ENCODE measurements at regions of chr1 and their contacts with region 1.

Region 1: GRCh38 chr1:156689035-156689952 is 12.1 kb upstream of the NES start:
- DNase-seq: peak; percentile 85
- H3K4me3 ChIP-seq: peak overlapping the region; percentile 39 to 51
- H3K27ac ChIP-seq: peak overlapping the region in 1 of 2 experiments; percentile 86; a peak in 2 of 4 replicates
- H3K4me1 ChIP-seq: peaks cover 13 to 52% of the 10 kb centered on the region in 2 experiments; a peak in 3 of 4 replicates
- H3K27me3 ChIP-seq: no peaks in the 10 kb centered on the region
- CTCF ChIP-seq: peak; percentile 74
- EP300 ChIP-seq: no peak
- RAD21 ChIP-seq: peak; percentile 99

Region 2: DNA sequence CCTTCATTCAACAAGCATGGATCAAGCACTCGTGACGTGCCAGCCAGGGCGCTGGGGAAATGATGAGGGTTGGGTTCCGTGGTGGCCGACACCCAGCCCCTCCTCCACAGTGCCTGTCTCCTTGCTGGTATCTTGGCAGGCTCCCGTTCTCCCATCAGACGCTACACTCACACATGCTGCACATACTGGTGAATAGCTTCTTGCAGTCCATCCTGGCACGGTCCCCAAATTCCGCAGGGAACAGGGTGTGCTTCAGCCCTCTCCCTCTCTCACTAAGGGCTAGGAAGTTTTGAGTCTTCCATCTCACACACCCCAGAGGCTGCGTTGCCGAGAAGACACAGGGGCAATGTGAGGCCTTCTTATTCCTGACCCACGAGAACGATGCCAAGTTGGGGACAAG is 178.6 kb before region 1 on chr1:
- CTCF ChIA-PET with region 1: no interaction called
- POLR2A ChIA-PET with region 1: no interaction called
- DNase-seq: no peak
- H3K4me3 ChIP-seq: no peak overlapping the region
- H3K27ac ChIP-seq: no peak overlapping the region
- H3K4me1 ChIP-seq: peaks cover 2 to 7% of the 10 kb centered on the region in 2 experiments; a peak in 2 of 4 replicates
- H3K27me3 ChIP-seq: no peaks in the 10 kb centered on the region
- CTCF ChIP-seq: no peak
- EP300 ChIP-seq: no peak
- RAD21 ChIP-seq: no peak

Region 3: GRCh38 chr1:156652131-156652991 is 36.9 kb before region 1 on chr1:
- CTCF ChIA-PET with region 1: interaction called, 682 read pairs
- POLR2A ChIA-PET with region 1: no interaction called
- DNase-seq: no peak
- H3K4me3 ChIP-seq: no peak overlapping the region
- H3K27ac ChIP-seq: no peak overlapping the region
- H3K4me1 ChIP-seq: peaks cover 0 to 16% of the 10 kb centered on the region in 2 experiments; a peak in 1 of 4 replicates
- H3K27me3 ChIP-seq: no peaks in the 10 kb centered on the region
- CTCF ChIP-seq: no peak
- EP300 ChIP-seq: no peak
- RAD21 ChIP-seq: no peak

Region 4: GRCh38 chr1:156705918-156706656 is 16.8 kb after region 1 on chr1:
- CTCF ChIA-PET with region 1: interaction called, 2,702 read pairs
- POLR2A ChIA-PET with region 1: interaction called, 57 read pairs
- DNase-seq: peak; percentile 90
- H3K4me3 ChIP-seq: peak overlapping the region; percentile 54 to 58
- H3K27ac ChIP-seq: peak overlapping the region in 1 of 2 experiments; percentile 98; a peak in 2 of 4 replicates
- H3K4me1 ChIP-seq: peaks cover 70 to 90% of the 10 kb centered on the region in 2 experiments
- H3K27me3 ChIP-seq: no peaks in the 10 kb centered on the region
- CTCF ChIP-seq: peak; percentile 96
- EP300 ChIP-seq: no peak
- RAD21 ChIP-seq: peak; percentile 66

Region 5: GRCh38 chr1:156751758-156752757 is 62.8 kb after region 1 on chr1:
- CTCF ChIA-PET with region 1: interaction called, 12 read pairs
- POLR2A ChIA-PET with region 1: no interaction called
- DNase-seq: peak; percentile 98
- H3K4me3 ChIP-seq: peak overlapping the region; percentile 78 to 98
- H3K27ac ChIP-seq: peak overlapping the region; percentile 100
- H3K4me1 ChIP-seq: peaks cover 27 to 39% of the 10 kb centered on the region in 2 experiments
- H3K27me3 ChIP-seq: no peaks in the 10 kb centered on the region
- CTCF ChIP-seq: no peak
- EP300 ChIP-seq: peak in 1 of 2 experiments; percentile 39; a peak in 1 of 4 replicates
- RAD21 ChIP-seq: no peak

Region 6: GRCh38 chr1:156797212-156797871 is 108.0 kb after region 1 on chr1:
- CTCF ChIA-PET with region 1: interaction called, 19 read pairs
- POLR2A ChIA-PET with region 1: no interaction called
- DNase-seq: peak; percentile 68
- H3K4me3 ChIP-seq: no peak overlapping the region; a peak in 1 of 4 replicates
- H3K27ac ChIP-seq: peak overlapping the region in 1 of 2 experiments; percentile 85; a peak in 2 of 4 replicates
- H3K4me1 ChIP-seq: peaks cover 20 to 59% of the 10 kb centered on the region in 2 experiments
- H3K27me3 ChIP-seq: no peaks in the 10 kb centered on the region
- CTCF ChIP-seq: peak; percentile 94
- EP300 ChIP-seq: peak in 1 of 2 experiments; percentile 83; a peak in 2 of 4 replicates
- RAD21 ChIP-seq: peak; percentile 90

Region 7: GRCh38 chr1:156910309-156910782 is 221.1 kb after region 1 on chr1:
- CTCF ChIA-PET with region 1: interaction called, 21 read pairs
- POLR2A ChIA-PET with region 1: no interaction called
- DNase-seq: peak; percentile 88
- H3K4me3 ChIP-seq: no peak overlapping the region; a peak in 1 of 4 replicates
- H3K27ac ChIP-seq: no peak overlapping the region
- H3K4me1 ChIP-seq: peaks cover 11 to 39% of the 10 kb centered on the region in 2 experiments; a peak in 3 of 4 replicates
- H3K27me3 ChIP-seq: no peaks in the 10 kb centered on the region
- CTCF ChIP-seq: peak; percentile 80
- EP300 ChIP-seq: no peak
- RAD21 ChIP-seq: peak; percentile 40

Measured in SK-N-SH (cell line).